Esophagus squamous epithelium (tissue), 5 donors: ENCODE measurements at regions of chr10 and their contacts with region 1.

Region 1: DNA sequence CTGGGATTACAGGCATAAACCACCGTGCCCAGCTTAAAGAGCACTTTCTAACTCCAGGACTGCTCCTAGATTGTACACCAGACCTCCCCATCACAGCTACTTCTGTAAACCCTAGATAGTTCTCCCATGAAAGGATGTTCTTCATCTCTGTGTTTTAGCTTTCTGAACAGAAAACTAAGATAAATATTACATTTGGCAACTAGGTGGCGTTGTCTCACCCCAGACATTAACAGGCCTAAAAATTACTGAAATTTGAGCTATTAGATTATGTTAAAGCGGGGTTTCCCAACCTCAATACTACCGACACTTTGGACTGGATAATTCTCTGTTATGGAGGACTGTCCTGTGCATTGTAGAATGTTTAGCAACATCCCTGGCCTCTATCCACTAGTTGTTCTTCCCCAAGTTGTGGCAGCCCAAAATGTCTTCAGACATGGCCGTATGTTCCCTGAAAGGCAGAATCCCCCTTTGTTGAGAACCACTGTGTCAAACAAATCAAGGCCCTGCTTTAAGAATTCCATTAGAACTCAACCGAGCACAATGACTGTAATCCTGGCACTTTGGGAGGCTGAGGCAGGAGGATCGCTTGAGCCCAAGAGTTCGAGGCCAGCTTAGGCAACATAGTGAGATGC is 19.1 kb downstream of the ATOH7 start:
- DNase-seq: no peak
- H3K4me3 ChIP-seq: no peak overlapping the region
- H3K27ac ChIP-seq: no peak overlapping the region
- H3K4me1 ChIP-seq: no peaks in the 10 kb centered on the region
- H3K27me3 ChIP-seq: no peaks in the 10 kb centered on the region
- CTCF ChIP-seq: peak; percentile 28 to 67 (median 50)
- POLR2A ChIP-seq: no peak

Region 2: GRCh38 chr10:67808704-67809103 is 404.1 kb before region 1 on chr10:
- intact Hi-C with region 1: no loop called
- DNase-seq: no peak
- H3K4me3 ChIP-seq: no peak overlapping the region
- H3K27ac ChIP-seq: no peak overlapping the region
- H3K4me1 ChIP-seq: no peaks in the 10 kb centered on the region
- H3K27me3 ChIP-seq: no peaks in the 10 kb centered on the region
- CTCF ChIP-seq: no peak
- POLR2A ChIP-seq: no peak

Region 3: DNA sequence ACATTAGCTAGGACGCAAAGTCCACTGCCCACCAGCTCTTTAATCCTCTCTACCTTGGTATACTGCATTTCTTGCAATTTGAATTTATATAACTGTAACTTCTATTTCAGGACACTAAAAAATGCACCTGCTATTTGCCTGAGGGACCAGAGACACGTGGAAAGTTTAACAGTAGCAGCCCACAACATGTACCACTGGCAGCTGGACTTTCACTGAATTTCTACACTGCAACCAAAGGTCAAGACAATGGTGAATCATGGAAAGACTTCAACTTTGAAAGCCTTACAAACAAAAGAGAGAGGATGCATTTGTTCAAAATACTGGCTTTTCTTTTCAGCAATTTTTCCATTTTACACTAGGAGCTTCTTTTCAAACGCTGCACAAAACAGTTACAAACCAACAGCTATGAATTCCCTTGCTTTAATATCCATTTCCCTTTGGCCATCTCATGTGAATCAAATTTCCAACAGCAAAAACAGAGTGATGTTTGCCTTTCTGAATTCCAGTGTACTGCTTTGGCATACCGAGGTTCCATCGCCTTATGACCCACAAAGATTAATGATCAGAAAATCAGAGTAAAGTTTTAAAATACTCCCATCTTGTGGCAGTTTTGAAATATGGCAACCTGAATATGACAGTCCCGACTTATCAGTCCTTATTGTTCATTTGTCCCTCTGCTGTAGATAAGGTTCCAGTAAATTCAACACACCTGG is 89.1 kb after region 1 on chr10:
- intact Hi-C with region 1: loop called (anchors 5 kb)
- DNase-seq: no peak
- H3K4me3 ChIP-seq: no peak overlapping the region
- H3K27ac ChIP-seq: no peak overlapping the region
- H3K4me1 ChIP-seq: no peaks in the 10 kb centered on the region
- H3K27me3 ChIP-seq: no peaks in the 10 kb centered on the region
- CTCF ChIP-seq: peak; percentile 28 to 66 (median 46)
- POLR2A ChIP-seq: no peak